Activated naive CD8-positive, alpha-beta T cell treated with anti-CD3 and anti-CD28 coated beads, Interleukin-2, amount 10 ng/mL, durations not matched to agents 7 days and 5 days (primary cell): ENCODE measurements at regions of chr12 and their contacts with region 1.

Region 1: DNA sequence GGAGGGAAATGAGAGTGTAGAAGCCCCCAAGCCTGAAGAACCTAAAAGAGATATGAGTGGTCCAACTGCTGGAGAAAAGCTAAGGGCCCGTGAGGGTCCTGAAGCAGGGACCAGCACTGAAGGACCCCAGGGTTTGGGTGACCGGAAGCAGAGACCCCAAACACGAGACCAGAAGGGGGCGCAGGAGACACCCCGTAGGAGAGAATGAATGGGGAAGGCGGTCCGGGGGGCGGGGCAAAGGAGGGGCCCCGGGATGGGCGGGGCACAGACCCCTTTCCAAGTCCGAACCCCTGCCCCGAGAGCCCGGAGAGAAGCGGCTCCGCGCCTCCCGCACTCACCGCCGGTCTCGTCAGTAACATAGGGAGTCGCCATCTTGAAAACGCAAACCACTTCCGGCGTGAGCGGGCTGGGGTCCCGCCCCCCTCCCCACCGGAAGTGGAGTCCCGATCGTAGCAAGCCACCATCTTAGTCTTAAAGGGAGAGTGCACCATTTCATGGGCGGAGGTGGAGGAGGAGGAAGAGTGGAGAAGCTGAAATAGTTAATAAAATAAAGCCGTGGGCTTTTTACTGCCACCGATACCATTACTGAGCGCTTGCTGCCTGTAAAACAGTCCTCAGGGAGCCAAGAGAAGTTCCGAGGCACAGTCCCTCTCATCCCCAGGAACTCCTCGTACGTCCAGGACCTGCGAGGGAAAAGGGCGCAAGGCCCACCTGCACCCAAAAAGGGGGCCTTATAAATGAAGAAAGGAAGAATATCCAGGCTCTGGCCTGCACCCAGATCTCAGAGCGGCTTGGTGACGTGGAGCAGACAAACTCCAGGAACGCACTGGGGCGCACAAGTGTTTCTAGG is 731 bp downstream of the PYM1 start:
- DNase-seq: peak; percentile 93
- ATAC-seq: peak; percentile 35
- H3K4me3 Mint-ChIP-seq: peak overlapping the region; percentile 98
- H3K27ac Mint-ChIP-seq: peak overlapping the region; percentile 98
- H3K4me1 Mint-ChIP-seq: peaks cover 44% of the 10 kb centered on the region
- H3K27me3 Mint-ChIP-seq: no peaks in the 10 kb centered on the region

Region 2: GRCh38 chr12:55738123-55739024 is 188.6 kb before region 1 on chr12:
- POLR2A ChIA-PET with region 1: interaction called, 13 read pairs
- DNase-seq: peak; percentile 73
- ATAC-seq: peak; percentile 74
- H3K4me3 Mint-ChIP-seq: peak overlapping the region; percentile 89
- H3K27ac Mint-ChIP-seq: peak overlapping the region; percentile 92
- H3K4me1 Mint-ChIP-seq: peaks cover 32% of the 10 kb centered on the region
- H3K27me3 Mint-ChIP-seq: peaks cover 4% of the 10 kb centered on the region

Region 3: DNA sequence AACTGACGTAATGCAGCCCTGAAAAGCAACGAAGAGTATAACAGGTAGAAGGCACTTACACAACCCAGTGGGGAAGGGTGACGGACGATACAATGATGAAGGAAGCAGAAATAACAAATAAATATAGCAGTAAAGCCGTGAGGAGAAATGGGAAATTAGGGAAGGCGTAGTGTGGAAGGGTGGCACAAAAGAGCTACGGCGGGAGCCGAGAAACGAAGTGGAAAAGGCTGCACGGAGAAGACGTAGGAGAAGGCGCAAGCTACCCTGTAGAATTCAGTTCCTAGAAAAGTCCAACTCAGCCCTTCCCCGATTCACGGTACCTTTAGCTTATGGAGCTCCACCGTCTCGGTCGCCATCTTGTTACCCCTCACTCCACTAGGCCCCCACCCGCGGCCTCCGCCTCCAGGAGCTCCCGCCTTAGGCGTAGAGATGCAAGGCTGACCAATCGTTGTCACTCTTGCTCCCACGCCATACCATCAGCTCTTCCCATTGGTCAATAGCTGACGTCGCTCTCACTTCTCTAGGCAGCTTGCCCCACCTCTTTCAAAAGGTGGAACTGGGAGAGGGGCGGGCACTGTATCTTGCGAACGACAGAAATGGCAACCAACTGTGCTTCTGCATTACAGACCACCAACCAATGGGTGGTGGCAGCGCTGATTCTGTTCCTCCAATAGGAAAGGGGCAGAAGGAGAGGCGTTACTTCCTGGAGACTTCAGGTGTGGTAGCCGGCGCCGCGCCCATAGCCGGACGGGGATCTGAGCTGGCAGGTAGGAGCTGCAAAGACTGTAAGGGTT is 109.4 kb before region 1 on chr12 and contains the starts of genes ORMDL2 and SARNP:
- POLR2A ChIA-PET with region 1: interaction called, 45 read pairs
- DNase-seq: peak; percentile 88
- ATAC-seq: peak; percentile 96
- H3K4me3 Mint-ChIP-seq: no peak within 1 kb of the TSS
- H3K27ac Mint-ChIP-seq: no peak within 1 kb of the TSS
- H3K4me1 Mint-ChIP-seq: peaks cover 35% of the 10 kb centered on the region
- H3K27me3 Mint-ChIP-seq: no peaks in the 10 kb centered on the region
- total RNA-seq, gene ORMDL2: 43.4 to 45.4 TPM
- total RNA-seq, gene SARNP: 80.6 to 82.4 TPM

Region 4: DNA sequence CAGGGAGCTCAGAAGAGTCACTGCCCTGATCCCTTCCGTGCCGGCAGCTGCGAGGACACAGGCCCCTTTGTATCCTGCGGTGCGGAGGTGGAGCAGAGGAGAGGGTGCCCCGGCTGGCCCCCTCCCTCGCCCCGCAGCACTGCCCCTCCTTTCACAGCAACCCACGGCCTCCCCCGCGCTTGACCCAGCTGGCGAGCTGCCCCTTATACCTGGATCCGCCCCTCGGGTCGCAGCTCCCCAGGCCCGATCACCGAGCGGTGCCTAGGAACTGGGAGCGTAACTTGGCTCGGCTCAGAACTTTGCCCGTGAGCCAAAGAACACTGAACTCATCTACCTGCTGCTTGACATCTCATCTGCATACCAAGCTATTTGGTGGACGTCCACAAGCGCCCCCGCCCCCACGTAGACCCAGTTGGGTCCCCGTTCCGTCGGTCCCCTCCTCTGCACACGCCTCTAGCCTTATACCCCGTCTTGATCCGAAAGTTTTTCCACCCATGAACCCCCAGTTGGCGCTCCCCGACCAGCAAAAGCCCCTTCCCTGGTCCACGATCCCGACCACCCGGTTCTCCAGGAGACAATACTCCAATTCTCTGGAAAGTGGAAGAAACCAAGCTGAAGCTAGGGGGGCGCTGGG is 96.9 kb before region 1 on chr12:
- POLR2A ChIA-PET with region 1: interaction called, 77 read pairs
- DNase-seq: no peak
- ATAC-seq: peak; percentile 41
- H3K4me3 Mint-ChIP-seq: peak overlapping the region; percentile 99
- H3K27ac Mint-ChIP-seq: peak overlapping the region; percentile 97
- H3K4me1 Mint-ChIP-seq: peaks cover 33% of the 10 kb centered on the region
- H3K27me3 Mint-ChIP-seq: no peaks in the 10 kb centered on the region

Region 5: GRCh38 chr12:55885113-55885512 is 41.9 kb before region 1 on chr12:
- POLR2A ChIA-PET with region 1: no interaction called
- DNase-seq: no peak
- ATAC-seq: no peak
- H3K4me3 Mint-ChIP-seq: no peak overlapping the region
- H3K27ac Mint-ChIP-seq: no peak overlapping the region
- H3K4me1 Mint-ChIP-seq: peaks cover 14% of the 10 kb centered on the region
- H3K27me3 Mint-ChIP-seq: no peaks in the 10 kb centered on the region

Region 6: GRCh38 chr12:55940065-55940732 is 13.2 kb after region 1 on chr12:
- POLR2A ChIA-PET with region 1: interaction called, 76 read pairs
- DNase-seq: peak; percentile 78
- ATAC-seq: peak; percentile 88
- H3K4me3 Mint-ChIP-seq: peak overlapping the region; percentile 54
- H3K27ac Mint-ChIP-seq: peak overlapping the region; percentile 81
- H3K4me1 Mint-ChIP-seq: peaks cover 68% of the 10 kb centered on the region
- H3K27me3 Mint-ChIP-seq: no peaks in the 10 kb centered on the region

Region 7: DNA sequence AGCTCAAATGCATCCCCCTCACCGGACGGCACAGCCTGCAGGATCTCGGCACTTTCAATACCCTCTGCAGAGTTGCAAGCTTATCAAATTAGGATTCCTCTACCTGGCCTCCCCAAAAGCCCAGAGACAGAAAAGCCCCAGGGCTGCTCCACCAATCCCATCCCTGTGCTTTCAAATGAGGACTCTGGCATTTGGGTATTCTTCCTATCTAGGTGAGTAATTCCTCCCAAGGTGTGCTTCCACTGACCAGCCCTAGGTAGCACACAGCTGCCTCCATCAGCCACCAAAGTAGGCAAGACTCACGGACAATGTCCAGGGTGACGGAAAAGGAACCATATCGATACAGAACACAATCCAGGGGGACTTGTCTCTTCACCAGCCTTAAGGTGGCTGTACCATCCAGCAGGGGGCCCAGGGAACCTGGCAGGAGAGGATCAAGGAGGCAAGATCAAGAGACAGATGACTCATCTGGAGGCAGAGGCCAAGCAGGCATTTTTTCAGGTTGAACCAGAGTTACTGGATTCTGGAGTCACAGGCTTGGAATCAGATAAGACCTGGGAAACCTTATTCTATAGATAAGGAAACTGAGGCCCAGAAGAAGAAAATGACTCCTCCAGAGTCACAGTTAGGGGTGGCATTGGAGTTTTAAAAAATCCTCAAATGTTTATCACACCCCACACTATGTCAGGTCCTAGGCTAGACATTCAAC is 29.0 kb after region 1 on chr12:
- POLR2A ChIA-PET with region 1: interaction called, 13 read pairs
- DNase-seq: peak; percentile 48
- ATAC-seq: peak; percentile 69
- H3K4me3 Mint-ChIP-seq: no peak overlapping the region
- H3K27ac Mint-ChIP-seq: peak overlapping the region; percentile 2
- H3K4me1 Mint-ChIP-seq: peaks cover 13% of the 10 kb centered on the region
- H3K27me3 Mint-ChIP-seq: no peaks in the 10 kb centered on the region

Region 8: GRCh38 chr12:56062996-56063395 is 136.0 kb after region 1 on chr12:
- POLR2A ChIA-PET with region 1: no interaction called
- DNase-seq: no peak
- ATAC-seq: no peak
- H3K4me3 Mint-ChIP-seq: no peak overlapping the region
- H3K27ac Mint-ChIP-seq: no peak overlapping the region
- H3K4me1 Mint-ChIP-seq: no peaks in the 10 kb centered on the region
- H3K27me3 Mint-ChIP-seq: peaks cover 4% of the 10 kb centered on the region